ENCODE measurements at regions of chr9 and their contacts with region 1.

Region 1: DNA sequence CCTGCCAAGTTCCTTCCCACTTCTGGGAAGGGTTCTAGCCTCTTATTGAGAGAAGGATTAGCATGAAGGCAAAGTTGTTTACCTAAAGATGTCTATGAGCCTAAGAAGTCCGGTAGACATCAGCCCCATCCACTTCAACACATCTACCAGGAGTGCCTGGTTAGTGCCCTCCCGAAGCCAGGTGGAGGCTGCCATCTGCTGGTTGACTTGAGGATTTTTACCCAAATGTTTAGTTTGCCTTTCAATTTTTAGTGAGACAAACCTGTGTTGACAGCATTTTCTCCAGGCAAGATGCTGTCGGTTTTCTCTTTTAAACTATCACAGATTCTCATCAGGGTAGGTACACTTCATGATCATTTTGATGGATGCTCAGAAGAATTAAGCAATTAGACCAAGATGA is 83.6 kb upstream of the TNFSF8 start:
- DNase-seq: peak; percentile 44 to 94 (median 74)

Region 2: GRCh38 chr9:114405294-114406034 is 608.5 kb before region 1 on chr9:
- intact Hi-C with region 1: loop called (anchors 1 kb)
- DNase-seq: peak; percentile 47 to 97 (median 86)

Region 3: GRCh38 chr9:114662081-114662989 is 351.7 kb before region 1 on chr9:
- intact Hi-C with region 1: loop called (anchors 5 kb)
- DNase-seq: peak in 6 of 10 donors; percentile 20 to 89 (median 58)

Region 4: DNA sequence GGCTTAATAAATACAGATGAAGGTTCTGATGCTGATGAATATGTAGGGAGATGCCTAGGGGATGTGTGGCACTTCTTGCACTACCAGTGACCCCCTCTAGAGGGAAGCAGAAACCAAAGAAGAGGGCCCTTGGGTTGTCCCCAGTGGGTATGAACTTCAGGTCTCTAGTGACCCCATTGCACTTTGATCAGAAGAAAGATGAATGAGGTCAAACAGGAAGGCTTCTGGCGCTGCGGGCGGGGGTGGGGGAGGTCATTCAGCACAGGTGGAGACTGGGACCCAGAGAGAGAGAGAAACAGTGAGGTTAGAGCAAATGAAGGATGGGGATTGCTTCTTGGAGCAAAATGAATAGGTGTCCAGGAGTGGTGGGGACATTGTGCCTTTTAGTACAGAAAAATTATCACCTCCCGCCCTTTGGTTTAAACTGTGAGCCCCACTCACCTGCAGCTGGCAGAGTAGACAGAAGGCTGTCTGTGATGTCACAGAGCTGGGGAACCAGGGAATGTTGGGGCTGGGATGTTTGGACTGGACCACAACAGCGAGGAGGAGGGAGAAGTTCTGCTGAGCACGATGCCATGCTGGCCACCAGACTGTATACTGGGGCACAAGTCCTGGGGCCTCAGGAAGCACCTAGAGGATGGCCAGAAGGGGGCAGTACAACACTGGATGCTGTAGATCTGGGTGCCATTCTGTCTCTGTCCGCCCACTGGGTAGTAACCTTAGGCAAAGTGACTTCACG is 332.2 kb before region 1 on chr9 and contains the start of gene TEX48:
- intact Hi-C with region 1: loop called (anchors 2 kb)
- DNase-seq: peak in 6 of 10 donors; percentile 33 to 91 (median 52)

Region 5: GRCh38 chr9:114738581-114739316 is 275.2 kb before region 1 on chr9:
- intact Hi-C with region 1: loop called (anchors 2 kb)
- DNase-seq: peak in 7 of 10 donors; percentile 26 to 90 (median 61)

Measured in posterior cingulate gyrus (tissue), 11 donors.